Posterior cingulate gyrus (tissue), 11 donors: ENCODE measurements at regions of chr15 and their contacts with region 1.

Region 1: DNA sequence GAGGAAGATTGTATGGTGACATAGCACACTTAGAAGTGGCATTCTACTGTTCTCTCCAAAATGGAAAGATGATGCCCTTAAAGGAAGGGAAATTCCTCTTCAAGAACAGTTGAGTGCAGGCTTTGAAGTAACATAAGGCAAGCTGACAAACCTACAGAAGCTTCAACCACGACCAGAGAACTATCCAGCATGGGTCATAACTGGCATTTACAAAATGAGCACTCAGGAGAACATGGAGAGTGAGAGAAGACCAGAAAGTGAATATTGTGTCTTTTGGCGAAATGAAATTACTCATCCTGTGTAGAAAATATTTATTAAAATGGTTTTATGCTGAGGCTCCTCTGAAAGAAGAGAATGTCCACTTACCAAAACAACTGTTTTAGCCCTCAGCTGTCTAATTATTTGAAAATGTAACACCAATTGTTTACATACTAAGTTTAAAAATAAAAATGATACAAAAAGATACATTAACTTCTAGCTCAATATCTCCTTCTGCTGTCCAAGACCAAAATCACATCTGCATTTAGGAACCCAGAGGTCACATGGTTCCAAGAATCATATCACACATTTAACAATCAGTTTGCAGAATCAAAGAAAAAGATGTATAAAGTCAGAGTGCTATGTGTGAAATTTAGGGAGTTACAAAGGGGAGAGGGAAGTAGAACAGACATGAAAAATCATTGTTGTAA is 216.9 kb downstream of the ATP8B4 start:
- DNase-seq: no peak

Region 2: GRCh38 chr15:49620658-49621368 is 281.3 kb before region 1 on chr15 and contains the starts of genes DTWD1 and FAM227B:
- intact Hi-C with region 1: loop called (anchors 5 kb)
- DNase-seq: peak; percentile 85 to 98 (median 92)

Region 3: GRCh38 chr15:50003786-50004334 is 101.7 kb after region 1 on chr15:
- intact Hi-C with region 1: loop called (anchors 2 kb)
- DNase-seq: peak; percentile 63 to 97 (median 84)